ENCODE measurements at regions of chr14 and their contacts with region 1.

Region 1: GRCh38 chr14:90758028-90758889 is 58.0 kb downstream of the TTC7B start:
- DNase-seq: peak; percentile 89 to 97
- H3K4me3 ChIP-seq: peak overlapping the region; percentile 16 to 53 (median 30); a peak in 5 of 8 replicates
- H3K27ac ChIP-seq: peak overlapping the region; percentile 79; the same call in 1 of the 2 replicates
- H3K4me1 ChIP-seq: peaks cover 0 to 11% (median 4%) of the 10 kb centered on the region in 4 experiments; a peak in 6 of 7 replicates
- H3K27me3 ChIP-seq: peaks cover 0 to 4% (median 1%) of the 10 kb centered on the region in 4 experiments; a peak in 3 of 7 replicates
- CTCF ChIP-seq: peak; percentile 93 to 94 (median 94)
- EP300 ChIP-seq: no peak
- POLR2A ChIP-seq: no peak
- RAD21 ChIP-seq: peak; percentile 72 to 78

Region 2: GRCh38 chr14:90717916-90718315 is 40.3 kb before region 1 on chr14:
- CTCF ChIA-PET with region 1: interaction called, 16 read pairs
- POLR2A ChIA-PET with region 1: no interaction called
- DNase-seq: peak in 1 of 2 experiments; percentile 47
- H3K4me3 ChIP-seq: no peak overlapping the region
- H3K27ac ChIP-seq: no peak overlapping the region
- H3K4me1 ChIP-seq: peaks cover 2 to 15% (median 7%) of the 10 kb centered on the region in 4 experiments; a peak in 6 of 7 replicates
- H3K27me3 ChIP-seq: no peaks in the 10 kb centered on the region
- CTCF ChIP-seq: no peak
- EP300 ChIP-seq: no peak
- POLR2A ChIP-seq: no peak
- RAD21 ChIP-seq: no peak

Region 3: DNA sequence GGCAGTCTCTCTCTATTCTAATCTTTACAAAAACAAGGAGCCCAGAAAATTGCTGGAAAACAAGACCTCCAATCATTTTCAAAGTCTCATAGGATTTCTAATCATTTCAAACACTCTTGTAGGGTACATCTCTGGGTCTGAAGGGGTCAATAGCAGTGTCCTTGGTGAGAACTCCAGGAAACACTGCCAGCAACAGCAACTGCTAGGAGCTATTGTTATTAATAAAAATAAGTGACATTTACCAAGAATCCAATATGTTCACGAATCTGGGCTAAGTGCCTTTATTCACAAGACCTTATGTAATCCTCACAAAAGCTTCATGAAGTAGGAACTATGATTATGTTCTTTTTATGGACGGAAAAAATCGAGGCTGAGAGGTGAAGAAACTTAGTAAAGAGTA is 14.8 kb before region 1 on chr14:
- CTCF ChIA-PET with region 1: interaction called, 32 read pairs
- POLR2A ChIA-PET with region 1: no interaction called
- DNase-seq: no peak
- H3K4me3 ChIP-seq: no peak overlapping the region
- H3K27ac ChIP-seq: no peak overlapping the region
- H3K4me1 ChIP-seq: no peaks in the 10 kb centered on the region
- H3K27me3 ChIP-seq: no peaks in the 10 kb centered on the region
- CTCF ChIP-seq: no peak
- EP300 ChIP-seq: no peak
- POLR2A ChIP-seq: no peak
- RAD21 ChIP-seq: no peak

Region 4: DNA sequence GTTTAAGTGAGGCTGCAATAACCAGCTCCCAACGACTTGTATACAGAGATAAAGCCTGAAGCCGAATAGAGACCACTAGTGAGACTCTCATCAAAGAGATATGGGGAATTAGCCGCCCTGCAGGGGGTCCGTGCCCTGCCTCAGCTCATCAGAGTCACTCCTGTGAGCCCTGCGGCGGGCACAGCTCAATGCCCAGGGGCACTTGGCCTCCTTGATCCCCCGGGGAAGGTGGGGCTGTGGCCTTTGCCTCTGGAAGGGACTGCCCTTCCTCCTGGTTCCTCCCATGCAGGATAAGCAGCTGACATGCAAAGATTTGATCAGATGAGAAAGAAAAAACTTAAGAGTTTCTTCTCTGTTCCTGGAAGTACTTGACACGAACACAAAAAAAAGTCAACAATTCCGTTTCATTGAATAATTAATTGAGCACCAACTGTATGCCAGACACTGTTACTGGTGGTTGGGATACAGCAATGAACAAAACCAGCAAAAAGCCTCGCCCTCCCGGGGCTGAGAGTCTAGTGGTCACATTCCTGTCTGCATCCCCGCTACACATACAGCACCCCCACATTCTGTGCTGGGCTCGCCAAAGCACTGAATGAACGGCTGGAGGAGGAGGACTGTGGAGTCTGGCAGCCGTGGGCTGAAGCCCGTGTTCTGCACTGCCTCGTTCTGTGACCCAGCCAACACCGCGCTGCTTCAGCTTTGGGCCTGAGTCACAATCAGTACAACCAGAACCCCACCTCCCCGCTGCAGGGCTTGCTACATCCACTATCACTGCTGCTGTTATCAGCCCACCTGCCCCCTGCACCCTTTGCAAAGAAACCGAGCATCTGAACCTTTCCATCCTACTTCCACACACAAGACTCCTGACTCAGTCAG is 47.6 kb after region 1 on chr14:
- CTCF ChIA-PET with region 1: interaction called, 10 read pairs
- POLR2A ChIA-PET with region 1: no interaction called
- DNase-seq: no peak
- H3K4me3 ChIP-seq: no peak overlapping the region
- H3K27ac ChIP-seq: no peak overlapping the region
- H3K4me1 ChIP-seq: peaks cover 0 to 8% (median 1%) of the 10 kb centered on the region in 4 experiments; a peak in 3 of 7 replicates
- H3K27me3 ChIP-seq: no peaks in the 10 kb centered on the region
- CTCF ChIP-seq: no peak
- EP300 ChIP-seq: no peak
- POLR2A ChIP-seq: no peak
- RAD21 ChIP-seq: no peak